ENCODE measurements at regions of chr19 and their contacts with region 1.

Region 1: DNA sequence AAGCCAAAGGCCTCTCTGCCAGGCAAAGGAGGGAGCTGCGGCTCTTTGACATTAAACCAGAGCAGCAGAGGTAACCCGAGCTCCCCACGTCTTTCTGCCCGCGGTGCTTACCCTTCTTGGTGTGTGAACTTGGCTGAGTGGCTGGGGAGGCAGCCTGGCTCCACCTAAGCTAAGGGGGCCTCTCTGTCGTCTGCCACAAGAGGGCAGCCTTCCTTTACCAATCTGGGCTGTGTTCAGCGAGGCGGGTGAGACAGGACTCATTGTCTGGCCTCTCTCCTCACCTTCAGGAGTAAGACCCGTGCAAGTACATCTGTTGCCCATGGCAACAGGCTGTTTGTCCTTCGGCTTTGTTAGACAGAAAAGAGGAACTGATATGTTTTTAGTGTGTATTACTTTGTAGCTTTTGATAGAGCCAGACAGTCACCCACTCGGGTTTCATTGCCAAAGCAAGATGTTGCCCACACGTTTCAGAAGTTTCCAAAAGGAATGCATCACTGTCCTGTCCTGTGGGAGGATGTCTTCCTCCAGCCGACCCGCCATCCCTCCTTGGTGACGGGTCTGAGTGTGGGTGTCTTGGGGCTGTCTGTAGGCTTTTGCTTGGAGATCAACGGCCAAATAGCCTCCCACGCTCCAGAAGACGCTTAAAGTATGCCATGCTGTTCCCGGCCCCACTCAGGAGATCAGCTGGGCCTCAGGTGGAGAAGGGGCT is 4.6 kb downstream of the POP4 start:
- DNase-seq: peak; percentile 73 to 88 (median 80)
- ATAC-seq: peak; percentile 74
- H3K4me3 ChIP-seq: no peak overlapping the region
- H3K4me1 ChIP-seq: peaks cover 7% of the 10 kb centered on the region
- CTCF ChIP-seq: peak; percentile 63

Region 2: GRCh38 chr19:29546583-29547190 is 64.0 kb before region 1 on chr19:
- intact Hi-C with region 1: no loop called
- DNase-seq: no peak
- ATAC-seq: no peak
- H3K4me3 ChIP-seq: no peak overlapping the region
- H3K4me1 ChIP-seq: no peaks in the 10 kb centered on the region
- CTCF ChIP-seq: no peak

Region 3: DNA sequence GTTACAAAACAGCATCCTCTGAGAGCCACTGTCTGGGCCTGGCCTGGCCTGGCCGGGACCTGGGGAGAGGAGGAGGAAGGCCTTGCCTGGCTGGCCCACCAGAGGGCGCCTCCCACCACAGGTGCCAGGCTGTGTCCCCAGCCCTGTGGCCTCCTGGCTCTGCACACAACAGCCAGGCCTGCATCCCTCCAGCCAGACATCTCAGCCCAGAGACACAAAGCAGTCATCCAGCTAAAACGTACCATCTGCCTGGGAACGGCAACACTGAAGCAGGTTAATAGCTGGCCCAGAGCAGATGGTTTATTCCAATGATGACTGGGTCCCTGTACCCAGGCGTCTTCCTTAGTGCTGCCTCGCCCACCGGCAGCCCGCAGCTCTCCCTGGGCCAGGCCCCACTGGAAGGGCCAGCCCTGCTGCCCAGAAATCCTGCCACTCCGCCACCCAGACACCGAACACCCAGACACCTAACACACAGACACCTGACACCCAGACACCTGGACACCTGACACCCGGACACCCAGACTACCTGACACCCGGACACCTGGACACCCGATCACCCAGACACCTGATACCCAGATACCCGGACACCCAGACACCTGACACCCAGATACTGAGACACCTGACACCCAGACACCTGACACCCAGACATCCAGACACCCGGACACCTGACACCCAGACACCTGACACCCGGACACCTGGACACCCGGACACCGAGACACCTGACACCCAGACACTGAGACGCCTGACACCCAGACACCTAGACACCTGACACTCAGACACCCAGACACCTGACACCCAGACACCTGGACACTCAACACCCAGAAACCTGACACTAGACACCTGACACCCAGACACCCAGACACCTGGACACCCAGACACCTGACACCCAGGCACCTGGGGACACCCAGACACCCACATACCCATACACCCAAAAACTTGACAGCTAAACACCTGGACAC is 84.2 kb after region 1 on chr19:
- intact Hi-C with region 1: loop called in 1 of 2 experiments (anchors 10 kb)
- DNase-seq: peak; percentile 83 to 89 (median 88)
- ATAC-seq: peak; percentile 99
- H3K4me3 ChIP-seq: no peak overlapping the region
- H3K4me1 ChIP-seq: no peaks in the 10 kb centered on the region
- CTCF ChIP-seq: peak; percentile 77

Region 4: DNA sequence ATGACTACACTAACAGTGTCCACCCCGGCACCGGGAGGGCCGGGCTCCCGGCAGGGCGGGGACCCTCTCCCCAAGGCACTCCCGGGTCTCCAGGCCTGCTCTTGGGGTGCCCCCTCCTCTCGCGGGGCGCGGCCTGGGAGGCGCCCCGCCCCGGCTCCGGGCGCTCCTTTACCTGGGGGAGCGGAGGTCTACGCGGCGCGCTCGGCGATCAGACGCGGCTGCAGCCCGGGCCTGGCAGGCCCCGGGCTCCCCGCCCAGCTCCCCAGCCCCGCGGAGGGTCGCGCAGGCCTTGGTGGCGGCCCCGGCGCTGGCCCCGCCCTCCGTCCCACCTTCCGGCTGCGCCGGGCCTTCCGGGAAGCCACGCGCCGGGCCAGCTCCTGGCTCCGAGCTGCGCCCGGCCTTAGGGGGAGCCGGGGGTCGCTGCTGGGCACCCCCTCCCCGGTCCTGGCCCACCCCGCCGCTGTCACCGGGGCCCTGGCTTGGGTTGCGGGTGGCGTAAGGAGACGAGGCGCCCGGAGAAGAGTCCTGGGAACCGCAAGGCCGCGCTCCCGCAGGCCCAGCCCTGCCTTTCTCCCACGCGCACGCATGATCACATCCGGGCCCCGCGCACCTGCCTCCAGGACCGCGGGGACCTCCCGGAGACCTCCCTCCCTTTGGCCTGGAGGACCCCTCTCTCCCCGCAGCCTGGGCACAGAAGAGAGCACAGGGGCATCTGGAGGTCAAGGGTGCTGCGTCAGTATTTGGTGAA is 104.4 kb after region 1 on chr19 and contains the start of gene C19orf12:
- intact Hi-C with region 1: loop called (anchors 2 to 5 kb)
- DNase-seq: peak; percentile 65 to 82 (median 78)
- ATAC-seq: peak; percentile 85
- H3K4me3 ChIP-seq: peak within 1 kb of the TSS; percentile 92
- H3K4me1 ChIP-seq: peaks cover 14% of the 10 kb centered on the region
- CTCF ChIP-seq: no peak
- total RNA-seq, gene C19orf12: 17.0 to 26.6 (median 18.4) TPM